ENCODE measurements at regions of chr1 and their contacts with region 1.

Region 1: DNA sequence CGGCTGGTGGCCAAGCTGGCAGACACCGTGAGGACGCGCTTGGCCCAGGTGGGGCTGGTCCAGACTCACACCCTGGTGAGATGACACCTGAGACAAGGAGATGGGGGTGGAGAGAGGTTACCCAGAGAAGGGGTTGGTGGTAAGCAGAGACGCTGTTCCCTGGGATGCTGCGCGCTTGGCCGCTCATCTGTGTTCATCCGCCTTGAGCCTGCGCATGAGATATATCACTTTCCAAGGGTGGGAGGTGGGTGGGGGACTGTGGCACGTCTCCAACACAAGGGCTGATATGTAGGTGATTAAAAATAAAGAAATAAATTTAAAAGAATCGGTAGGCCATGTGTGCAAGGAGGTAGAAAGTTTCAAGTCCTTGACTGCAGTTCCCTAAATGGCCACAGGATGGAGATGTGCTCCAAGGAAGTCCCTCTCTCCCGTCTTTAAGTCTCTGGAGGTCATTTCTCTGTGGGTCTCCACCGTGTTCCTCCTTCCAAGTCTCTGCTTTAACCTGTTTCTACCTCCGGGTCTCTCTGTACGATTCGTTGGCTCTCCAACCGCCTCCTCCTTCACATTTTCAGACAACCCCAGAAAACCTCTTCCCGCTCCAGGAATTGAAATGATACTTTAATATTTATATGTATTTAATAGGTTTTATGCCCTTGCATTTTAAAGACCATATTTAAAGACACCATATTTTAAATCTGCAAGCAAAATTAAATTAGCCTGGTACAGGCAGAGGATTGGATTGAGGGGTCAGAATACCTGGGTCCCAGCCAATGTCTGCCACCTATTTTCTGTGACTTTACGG is 4.5 kb downstream of the TTC24 start:
- DNase-seq: peak; percentile 40
- H3K4me3 ChIP-seq: no peak overlapping the region
- CTCF ChIP-seq: peak; percentile 81

Region 2: GRCh38 chr1:156504821-156505678 is 79.0 kb before region 1 on chr1:
- CTCF ChIA-PET with region 1: no interaction called
- POLR2A ChIA-PET with region 1: no interaction called
- DNase-seq: peak; percentile 97
- H3K4me3 ChIP-seq: peak overlapping the region; percentile 47
- CTCF ChIP-seq: no peak

Region 3: GRCh38 chr1:156571949-156572662 is 11.9 kb before region 1 on chr1 and contains the start of gene IQGAP3:
- CTCF ChIA-PET with region 1: interaction called, 31 read pairs
- POLR2A ChIA-PET with region 1: no interaction called
- DNase-seq: peak; percentile 12
- H3K4me3 ChIP-seq: peak within 1 kb of the TSS; percentile 78
- CTCF ChIP-seq: no peak

Region 4: GRCh38 chr1:156601122-156601830 is 17.3 kb after region 1 on chr1 and contains the start of gene GPATCH4:
- CTCF ChIA-PET with region 1: interaction called, 25 read pairs
- POLR2A ChIA-PET with region 1: no interaction called
- DNase-seq: peak; percentile 53
- H3K4me3 ChIP-seq: peak within 1 kb of the TSS; percentile 89
- CTCF ChIP-seq: no peak

Region 5: GRCh38 chr1:156801409-156802121 is 217.5 kb after region 1 on chr1:
- CTCF ChIA-PET with region 1: no interaction called
- POLR2A ChIA-PET with region 1: no interaction called
- DNase-seq: peak; percentile 87
- H3K4me3 ChIP-seq: no peak overlapping the region
- CTCF ChIP-seq: peak; percentile 58

Measured in AG04449 (cell line).